ENCODE measurements at regions of chr15 and their contacts with region 1.

Region 1: DNA sequence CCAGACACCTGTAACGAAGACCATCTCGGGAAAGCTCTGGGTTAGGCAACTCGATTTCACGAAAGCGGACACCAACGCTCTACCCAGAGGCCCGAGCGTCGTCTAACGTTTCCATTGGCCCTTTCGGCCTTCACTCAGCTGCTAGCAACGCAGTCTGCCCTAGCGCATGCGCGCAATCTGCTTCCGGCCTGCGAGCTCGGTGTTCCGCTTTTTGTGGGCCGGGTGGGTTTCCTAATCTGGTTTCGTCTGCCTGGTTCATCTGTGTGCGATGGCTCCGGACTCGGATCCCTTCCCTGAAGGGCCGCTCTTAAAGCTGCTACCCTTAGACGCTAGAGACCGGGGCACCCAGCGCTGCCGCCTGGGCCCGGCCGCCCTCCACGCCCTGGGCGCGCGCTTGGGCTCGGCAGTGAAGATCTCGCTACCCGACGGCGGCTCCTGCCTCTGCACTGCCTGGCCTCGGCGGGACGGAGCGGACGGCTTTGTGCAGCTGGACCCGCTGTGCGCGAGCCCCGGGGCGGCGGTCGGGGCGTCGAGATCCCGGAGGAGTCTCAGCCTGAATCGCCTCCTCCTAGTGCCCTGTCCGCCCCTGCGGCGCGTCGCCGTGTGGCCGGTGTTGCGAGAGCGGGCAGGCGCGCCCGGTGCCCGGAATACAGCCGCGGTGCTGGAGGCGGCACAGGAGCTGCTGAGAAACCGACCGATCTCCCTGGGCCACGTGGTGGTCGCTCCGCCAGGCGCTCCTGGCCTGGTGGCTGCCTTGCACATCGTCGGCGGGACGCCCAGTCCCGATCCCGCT is 24.0 kb upstream of the GATM start:
- DNase-seq: peak; percentile 99

Region 2: DNA sequence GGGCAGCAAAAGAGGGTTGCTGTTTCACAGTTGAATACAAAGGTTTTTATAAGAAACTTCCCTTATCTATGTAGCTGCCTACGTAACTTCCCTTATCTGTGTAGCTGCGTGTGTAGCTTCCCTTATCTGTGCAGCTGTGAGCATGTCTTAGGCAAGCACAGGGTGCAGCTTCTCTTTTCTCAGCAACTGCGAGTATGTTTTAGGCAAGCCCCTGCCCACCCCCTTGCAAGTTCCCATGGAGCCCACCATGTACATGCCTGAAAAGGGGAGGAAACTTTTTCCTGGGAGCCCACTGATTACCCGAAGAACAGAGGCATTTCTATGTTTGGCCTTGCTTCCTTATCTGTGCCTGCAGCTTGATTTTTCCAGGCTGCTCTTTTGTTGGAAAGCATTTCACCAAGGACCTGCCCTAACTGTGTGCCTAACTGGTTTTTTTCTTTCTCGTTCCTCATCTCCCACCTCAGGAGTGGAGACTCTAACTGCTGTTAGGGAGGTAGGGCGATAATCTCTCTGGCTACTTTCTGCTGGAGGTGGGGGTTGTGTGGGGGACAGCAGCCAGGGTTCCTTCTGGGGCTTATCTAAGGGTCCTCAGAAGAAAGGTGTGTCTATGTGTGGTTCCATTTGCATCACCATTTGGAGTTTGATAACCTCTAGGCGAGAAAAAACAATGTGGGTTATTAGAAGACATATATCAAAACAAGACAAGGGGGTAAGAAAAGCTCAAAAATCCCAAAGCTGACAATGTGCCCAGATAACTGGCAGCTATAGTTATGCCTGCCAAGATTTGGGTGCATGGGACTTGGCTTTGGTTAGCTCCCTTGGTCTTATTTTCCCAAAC is 353.3 kb before region 1 on chr15:
- intact Hi-C with region 1: no loop called
- DNase-seq: no peak

Region 3: DNA sequence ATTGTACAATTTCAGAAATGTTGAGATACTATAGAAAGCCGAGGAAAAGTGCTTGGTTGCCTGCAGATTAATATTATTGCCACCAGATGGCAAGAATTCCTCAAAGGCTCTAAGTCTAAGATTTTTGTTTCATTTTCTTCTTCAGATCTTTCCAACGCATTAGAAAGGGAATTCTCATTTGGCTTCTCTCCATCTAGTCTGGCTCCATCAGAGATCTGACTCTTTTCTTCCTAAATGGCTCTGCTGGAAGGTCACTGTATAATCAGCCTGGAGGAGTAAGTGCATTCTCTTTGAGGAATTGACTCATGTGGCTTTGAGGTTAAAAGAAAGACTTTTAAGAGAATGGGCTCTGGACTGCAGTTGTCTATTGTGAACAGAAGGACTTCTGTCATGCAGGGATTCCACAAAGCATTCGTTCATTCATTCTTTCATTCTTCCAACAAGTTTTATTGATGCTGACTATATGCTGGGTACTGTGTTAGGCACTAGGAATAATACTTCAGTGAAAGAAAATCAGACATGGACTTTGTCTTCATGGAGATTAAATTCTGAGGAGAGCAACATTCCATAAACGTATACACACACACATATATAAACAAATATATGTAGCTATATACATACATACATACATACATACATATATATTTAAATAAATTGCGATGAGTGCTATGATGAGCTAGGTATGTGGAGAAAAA is 95.0 kb before region 1 on chr15:
- intact Hi-C with region 1: loop called (anchors 5 to 10 kb)
- DNase-seq: no peak

Region 4: GRCh38 chr15:45549541-45550220 is 147.3 kb after region 1 on chr15:
- intact Hi-C with region 1: no loop called
- DNase-seq: no peak

Measured in posterior vena cava (tissue), 2 donors.